SK-N-SH (cell line): ENCODE measurements at regions of chrX and their contacts with region 1.

Region 1: GRCh38 chrX:25144043-25144940 is 128.5 kb upstream of the ARX start:
- DNase-seq: peak; percentile 51
- H3K4me3 ChIP-seq: no peak overlapping the region
- H3K27ac ChIP-seq: no peak overlapping the region
- H3K4me1 ChIP-seq: no peaks in the 10 kb centered on the region; a peak in 1 of 4 replicates
- H3K27me3 ChIP-seq: peaks cover under 1% of the 10 kb centered on the region; the same call in 1 of the 2 replicates
- CTCF ChIP-seq: peak; percentile 85
- EP300 ChIP-seq: no peak
- RAD21 ChIP-seq: peak; percentile 80

Region 2: GRCh38 chrX:24395775-24396174 is 748.5 kb before region 1 on chrX:
- CTCF ChIA-PET with region 1: interaction called, 21 read pairs
- POLR2A ChIA-PET with region 1: no interaction called
- DNase-seq: peak; percentile 54
- H3K4me3 ChIP-seq: no peak overlapping the region
- H3K27ac ChIP-seq: no peak overlapping the region
- H3K4me1 ChIP-seq: no peaks in the 10 kb centered on the region
- H3K27me3 ChIP-seq: peaks cover 30% of the 10 kb centered on the region; the same call in 1 of the 2 replicates
- CTCF ChIP-seq: peak; percentile 81
- EP300 ChIP-seq: no peak
- RAD21 ChIP-seq: peak; percentile 97

Region 3: DNA sequence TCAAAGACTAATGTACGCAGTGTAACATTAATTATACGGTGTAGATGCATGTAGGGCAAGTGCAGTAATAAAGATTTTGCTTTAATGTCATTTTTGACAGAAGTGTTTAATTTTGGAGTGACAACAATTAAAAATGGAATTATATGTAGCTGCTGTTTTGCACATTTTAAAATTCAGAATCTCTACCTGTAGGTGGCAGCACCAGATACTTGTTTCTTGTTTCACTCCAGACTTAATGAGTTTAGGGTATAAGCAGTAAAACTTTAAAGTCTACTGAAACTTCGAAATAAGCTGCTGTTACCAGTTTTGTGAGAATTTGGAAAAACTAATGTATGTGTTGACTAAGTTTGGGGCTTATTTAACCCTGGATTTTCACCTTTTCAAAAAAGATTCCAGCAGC is 305.7 kb before region 1 on chrX:
- CTCF ChIA-PET with region 1: interaction called, 46 read pairs
- POLR2A ChIA-PET with region 1: no interaction called
- DNase-seq: peak; percentile 7
- H3K4me3 ChIP-seq: no peak overlapping the region
- H3K27ac ChIP-seq: no peak overlapping the region
- H3K4me1 ChIP-seq: no peaks in the 10 kb centered on the region; a peak in 1 of 4 replicates
- H3K27me3 ChIP-seq: no peaks in the 10 kb centered on the region
- CTCF ChIP-seq: peak; percentile 78
- EP300 ChIP-seq: no peak
- RAD21 ChIP-seq: peak; percentile 65

Region 4: GRCh38 chrX:25131055-25131454 is 13.2 kb before region 1 on chrX:
- CTCF ChIA-PET with region 1: interaction called, 13 read pairs
- POLR2A ChIA-PET with region 1: no interaction called
- DNase-seq: no peak
- H3K4me3 ChIP-seq: no peak overlapping the region
- H3K27ac ChIP-seq: no peak overlapping the region
- H3K4me1 ChIP-seq: no peaks in the 10 kb centered on the region
- H3K27me3 ChIP-seq: no peaks in the 10 kb centered on the region
- CTCF ChIP-seq: no peak
- EP300 ChIP-seq: no peak
- RAD21 ChIP-seq: no peak

Region 5: DNA sequence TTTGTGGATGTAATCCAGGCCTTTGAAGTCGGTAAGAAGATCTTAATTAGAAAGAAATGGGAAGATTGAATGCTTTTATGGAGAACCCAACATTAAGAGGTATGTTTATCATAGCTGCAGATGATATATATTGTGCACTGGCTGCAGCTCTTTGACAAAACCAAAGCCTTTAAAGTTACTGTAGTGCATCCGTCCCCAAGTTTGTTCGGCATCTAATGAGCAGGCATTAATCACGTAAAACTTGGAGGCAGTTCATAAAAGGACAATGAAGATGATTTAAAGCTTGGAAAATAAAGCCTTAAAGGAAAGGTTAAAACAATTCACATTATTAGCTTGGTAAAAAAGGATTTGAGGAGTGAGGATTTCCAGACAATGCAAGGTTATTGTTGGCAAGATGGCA is 22.3 kb after region 1 on chrX:
- CTCF ChIA-PET with region 1: interaction called, 17 read pairs
- POLR2A ChIA-PET with region 1: no interaction called
- DNase-seq: no peak
- H3K4me3 ChIP-seq: no peak overlapping the region
- H3K27ac ChIP-seq: no peak overlapping the region
- H3K4me1 ChIP-seq: no peaks in the 10 kb centered on the region
- H3K27me3 ChIP-seq: no peaks in the 10 kb centered on the region
- CTCF ChIP-seq: no peak
- EP300 ChIP-seq: no peak
- RAD21 ChIP-seq: no peak